A549 (cell line): ENCODE measurements at regions of chr22 and their contacts with region 1.

Region 1: GRCh38 chr22:37817705-37818408 is 5.3 kb upstream of the GALR3 start:
- DNase-seq: peak; percentile 68 to 69
- ATAC-seq: peak; percentile 77 to 94
- H3K4me3 ChIP-seq: 0 out of 3 replicates have a peak overlapping the region, but pooled peaks have one; percentile 29
- H3K27ac ChIP-seq: peak overlapping the region; percentile 71 to 88
- H3K4me1 ChIP-seq: peaks cover 4% of the 10 kb centered on the region; the same call in 1 of the 3 replicates
- CTCF ChIP-seq: peak; percentile 85
- EP300 ChIP-seq: no peak
- POLR2A ChIP-seq: no peak
- RAD21 ChIP-seq: peak; percentile 76 to 85

Region 2: DNA sequence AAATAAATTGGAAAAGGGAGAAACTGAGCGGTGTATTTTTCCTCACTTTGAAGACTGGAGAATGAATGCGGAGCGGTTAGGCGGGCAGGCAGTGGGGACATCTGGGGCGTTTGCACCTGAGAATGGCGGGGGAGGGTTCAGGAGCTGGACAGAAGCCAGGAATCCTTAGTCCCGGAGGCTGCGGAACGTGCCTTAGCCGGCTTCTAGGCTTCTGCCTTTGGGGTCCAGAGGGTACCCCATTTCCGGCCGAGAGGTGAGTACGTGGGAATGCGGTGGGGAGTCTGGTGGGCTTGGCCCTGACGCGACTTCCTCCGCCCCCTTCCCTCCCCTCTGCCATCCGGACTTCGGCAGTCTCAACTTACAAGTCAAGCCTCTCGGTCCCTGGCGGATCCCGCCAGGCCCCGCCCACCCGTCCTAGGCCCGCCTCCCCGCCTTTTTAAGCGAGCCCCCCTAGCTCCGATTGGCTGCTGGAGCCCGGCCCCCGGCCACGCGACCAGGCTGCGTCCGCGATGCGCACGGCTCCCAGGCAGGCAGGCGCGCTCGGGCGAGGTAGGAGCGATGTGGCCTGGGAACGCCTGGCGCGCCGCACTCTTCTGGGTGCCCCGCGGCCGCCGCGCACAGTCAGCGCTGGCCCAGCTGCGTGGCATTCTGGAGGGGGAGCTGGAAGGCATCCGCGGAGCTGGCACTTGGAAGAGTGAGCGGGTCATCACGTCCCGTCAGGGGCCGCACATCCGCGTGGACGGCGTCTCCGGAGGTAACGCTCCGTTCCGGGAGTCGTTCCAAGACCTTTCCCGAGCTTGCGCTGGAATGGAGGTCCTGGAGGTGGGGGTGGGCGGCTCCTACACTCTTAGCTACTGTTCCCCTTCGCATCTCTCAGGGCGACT is 10.2 kb before region 1 on chr22 and contains the start of gene GCAT:
- CTCF ChIA-PET with region 1: interaction called, 47 read pairs
- POLR2A ChIA-PET with region 1: interaction called, 3 read pairs
- DNase-seq: peak; percentile 91 to 94
- ATAC-seq: peak; percentile 71 to 88
- H3K4me3 ChIP-seq: peak within 1 kb of the TSS; percentile 69
- H3K27ac ChIP-seq: peak within 1 kb of the TSS; percentile 55 to 99; a peak in 5 of 6 replicates
- H3K4me1 ChIP-seq: peaks cover 20% of the 10 kb centered on the region
- CTCF ChIP-seq: no peak
- EP300 ChIP-seq: no peak
- POLR2A ChIP-seq: peak; percentile 28; the same call in 1 of the 2 replicates
- RAD21 ChIP-seq: no peak
- polyA plus RNA-seq, gene GCAT: 1.2 and 1.3 TPM in 2 replicates

Region 3: GRCh38 chr22:37842015-37842793 is 24.3 kb after region 1 on chr22:
- CTCF ChIA-PET with region 1: interaction called, 37 read pairs
- POLR2A ChIA-PET with region 1: no interaction called
- DNase-seq: no peak
- ATAC-seq: no peak
- H3K4me3 ChIP-seq: no peak overlapping the region
- H3K27ac ChIP-seq: no peak overlapping the region
- H3K4me1 ChIP-seq: peaks cover 10% of the 10 kb centered on the region; the same call in 2 of the 3 replicates
- CTCF ChIP-seq: no peak
- EP300 ChIP-seq: no peak
- POLR2A ChIP-seq: no peak
- RAD21 ChIP-seq: no peak

Region 4: DNA sequence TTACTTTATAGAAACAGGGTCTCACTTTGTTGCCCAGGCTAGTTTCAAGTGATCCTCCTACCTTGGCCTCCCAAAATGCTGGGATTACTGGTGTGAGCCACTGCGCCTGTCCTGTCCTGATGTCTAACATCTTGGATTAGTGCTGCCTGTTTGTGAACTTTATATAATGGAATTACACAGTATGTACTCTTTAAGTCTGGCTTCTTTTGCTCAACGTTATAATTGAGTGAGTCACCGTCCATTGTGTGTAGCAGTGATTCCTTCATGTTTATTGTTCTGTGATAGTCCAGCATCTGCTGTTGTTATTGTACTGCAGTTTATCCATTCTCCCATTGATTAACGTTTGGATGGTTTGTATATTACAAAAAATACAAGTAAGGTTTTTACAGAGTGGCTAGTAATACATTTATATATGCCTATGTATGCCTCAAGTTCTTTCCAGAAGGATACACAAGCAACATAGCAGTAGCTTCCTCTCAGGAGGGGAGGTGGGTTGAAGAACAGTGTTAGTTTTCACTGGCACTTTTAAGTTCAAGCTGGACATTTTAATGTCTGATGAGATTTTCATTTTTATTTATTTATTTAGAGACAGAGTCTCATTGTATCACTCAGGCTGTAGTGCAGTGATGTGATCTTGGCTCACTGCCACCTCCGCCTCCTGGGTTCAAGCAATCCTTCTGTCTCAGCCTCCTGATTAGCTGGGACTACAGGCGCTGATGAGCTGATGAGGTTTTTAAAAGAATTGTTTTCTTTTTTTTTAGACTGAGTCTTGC is 63.0 kb after region 1 on chr22:
- CTCF ChIA-PET with region 1: interaction called, 21 read pairs
- POLR2A ChIA-PET with region 1: no interaction called
- DNase-seq: no peak
- ATAC-seq: no peak
- H3K4me3 ChIP-seq: no peak overlapping the region
- H3K27ac ChIP-seq: no peak overlapping the region
- H3K4me1 ChIP-seq: no peaks in the 10 kb centered on the region
- CTCF ChIP-seq: no peak
- EP300 ChIP-seq: no peak
- POLR2A ChIP-seq: no peak
- RAD21 ChIP-seq: no peak

Region 5: DNA sequence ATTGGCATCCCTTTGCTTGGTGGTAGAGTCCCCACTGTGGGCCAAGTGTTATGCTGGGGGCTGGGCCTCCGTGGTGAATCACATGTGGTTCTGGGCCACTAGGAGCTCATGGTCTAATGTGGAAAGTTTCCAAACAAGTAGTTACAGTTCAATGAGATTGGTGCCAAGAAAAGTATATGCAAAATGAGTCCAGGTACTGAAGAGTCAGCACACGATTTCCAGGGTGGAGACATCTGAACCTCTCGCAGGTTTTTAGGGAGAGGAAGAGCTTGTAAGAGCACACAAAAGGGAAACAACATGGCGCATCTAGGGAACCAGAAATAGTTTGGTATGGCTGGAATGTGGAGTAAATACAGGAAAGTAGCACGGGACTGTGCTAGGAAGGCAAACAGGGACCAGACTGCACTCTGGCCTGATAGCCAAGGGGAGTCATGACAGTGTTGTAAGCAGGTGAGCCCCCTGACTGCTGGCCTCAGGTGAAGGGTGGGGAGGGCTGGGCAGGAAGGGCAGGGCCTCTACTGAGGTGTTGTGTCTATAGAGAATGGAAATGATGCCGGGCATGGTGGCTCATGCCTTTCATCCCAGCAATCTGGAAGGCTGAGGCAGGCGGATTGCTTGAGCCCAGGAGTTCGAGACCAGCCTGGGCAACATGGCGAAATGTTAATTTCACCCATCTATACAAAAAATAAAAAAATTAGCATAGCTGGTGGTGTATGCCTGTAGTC is 148.2 kb after region 1 on chr22:
- CTCF ChIA-PET with region 1: interaction called, 65 read pairs
- POLR2A ChIA-PET with region 1: no interaction called
- DNase-seq: no peak
- ATAC-seq: no peak
- H3K4me3 ChIP-seq: no peak overlapping the region
- H3K27ac ChIP-seq: no peak overlapping the region
- H3K4me1 ChIP-seq: no peaks in the 10 kb centered on the region
- CTCF ChIP-seq: no peak
- EP300 ChIP-seq: no peak
- POLR2A ChIP-seq: no peak
- RAD21 ChIP-seq: no peak